Naive thymus-derived CD4-positive, alpha-beta T cell (primary cell): ENCODE measurements at regions of chrX and their contacts with region 1.

Region 1: GRCh38 chrX:46573331-46573891 is at the start of gene CHST7:
- DNase-seq: peak in 8 of 9 donors; percentile 15 to 60 (median 25)
- ATAC-seq: peak; percentile 69
- H3K4me3 ChIP-seq: peak within 1 kb of the TSS; percentile 61
- H3K4me3 Mint-ChIP-seq: peak within 1 kb of the TSS; percentile 51 to 84 (median 74)
- H3K27ac ChIP-seq: peak within 1 kb of the TSS; percentile 57
- H3K27ac Mint-ChIP-seq: peak within 1 kb of the TSS in 7 of 9 donors; percentile 17 to 81 (median 72)
- H3K4me1 ChIP-seq: peaks cover 3 to 17% of the 10 kb centered on the region in 2 donors
- H3K4me1 Mint-ChIP-seq: peaks cover 16 to 41% (median 35%) of the 10 kb centered on the region in 7 donors
- H3K27me3 ChIP-seq: no peaks in the 10 kb centered on the region
- H3K27me3 Mint-ChIP-seq: no peaks in the 10 kb centered on the region
- total RNA-seq, gene CHST7: 2.1 to 7.2 (median 2.3) TPM

Region 2: DNA sequence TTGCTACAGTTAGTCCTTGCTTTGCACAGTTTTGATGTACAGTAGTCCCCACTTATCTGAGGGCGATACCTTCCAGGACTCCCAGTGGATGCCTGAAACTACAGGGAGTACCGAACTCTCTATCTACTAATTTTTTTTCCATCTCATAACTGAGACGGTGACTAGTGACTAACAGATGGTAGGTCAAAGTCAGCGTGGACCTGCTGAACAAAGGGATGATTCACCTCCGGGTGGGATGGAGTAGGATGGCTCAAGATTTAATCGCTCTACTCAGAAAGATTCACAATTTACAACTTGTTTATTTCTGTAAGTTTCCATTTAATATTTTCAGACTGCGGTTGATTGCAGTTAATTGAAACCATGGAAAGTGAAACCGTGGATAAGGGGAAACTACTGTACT is 683.9 kb before region 1 on chrX:
- CTCF ChIA-PET with region 1: no interaction called
- POLR2A ChIA-PET with region 1: no interaction called
- intact Hi-C with region 1: no loop called
- DNase-seq: no peak
- ATAC-seq: no peak
- H3K4me3 ChIP-seq: no peak overlapping the region
- H3K4me3 Mint-ChIP-seq: no peak overlapping the region
- H3K27ac ChIP-seq: no peak overlapping the region
- H3K27ac Mint-ChIP-seq: no peak overlapping the region
- H3K4me1 ChIP-seq: no peaks in the 10 kb centered on the region
- H3K4me1 Mint-ChIP-seq: no peaks in the 10 kb centered on the region
- H3K27me3 ChIP-seq: no peaks in the 10 kb centered on the region
- H3K27me3 Mint-ChIP-seq: no peaks in the 10 kb centered on the region

Region 3: GRCh38 chrX:46588263-46588662 is 14.9 kb after region 1 on chrX:
- CTCF ChIA-PET with region 1: interaction called, 4 read pairs
- POLR2A ChIA-PET with region 1: interaction called, 8 read pairs
- intact Hi-C with region 1: loop called (anchors 1 to 2 kb)
- DNase-seq: peak in 8 of 9 donors; percentile 30 to 60 (median 48)
- ATAC-seq: peak; percentile 27
- H3K4me3 ChIP-seq: peak overlapping the region; percentile 28
- H3K4me3 Mint-ChIP-seq: peak overlapping the region; percentile 68 to 86 (median 78)
- H3K27ac ChIP-seq: peak overlapping the region; percentile 44
- H3K27ac Mint-ChIP-seq: peak overlapping the region; percentile 69 to 87 (median 85)
- H3K4me1 ChIP-seq: peaks cover 16% of the 10 kb centered on the region in 2 donors
- H3K4me1 Mint-ChIP-seq: peaks cover 7 to 49% (median 32%) of the 10 kb centered on the region in 7 donors
- H3K27me3 ChIP-seq: no peaks in the 10 kb centered on the region
- H3K27me3 Mint-ChIP-seq: no peaks in the 10 kb centered on the region

Region 4: DNA sequence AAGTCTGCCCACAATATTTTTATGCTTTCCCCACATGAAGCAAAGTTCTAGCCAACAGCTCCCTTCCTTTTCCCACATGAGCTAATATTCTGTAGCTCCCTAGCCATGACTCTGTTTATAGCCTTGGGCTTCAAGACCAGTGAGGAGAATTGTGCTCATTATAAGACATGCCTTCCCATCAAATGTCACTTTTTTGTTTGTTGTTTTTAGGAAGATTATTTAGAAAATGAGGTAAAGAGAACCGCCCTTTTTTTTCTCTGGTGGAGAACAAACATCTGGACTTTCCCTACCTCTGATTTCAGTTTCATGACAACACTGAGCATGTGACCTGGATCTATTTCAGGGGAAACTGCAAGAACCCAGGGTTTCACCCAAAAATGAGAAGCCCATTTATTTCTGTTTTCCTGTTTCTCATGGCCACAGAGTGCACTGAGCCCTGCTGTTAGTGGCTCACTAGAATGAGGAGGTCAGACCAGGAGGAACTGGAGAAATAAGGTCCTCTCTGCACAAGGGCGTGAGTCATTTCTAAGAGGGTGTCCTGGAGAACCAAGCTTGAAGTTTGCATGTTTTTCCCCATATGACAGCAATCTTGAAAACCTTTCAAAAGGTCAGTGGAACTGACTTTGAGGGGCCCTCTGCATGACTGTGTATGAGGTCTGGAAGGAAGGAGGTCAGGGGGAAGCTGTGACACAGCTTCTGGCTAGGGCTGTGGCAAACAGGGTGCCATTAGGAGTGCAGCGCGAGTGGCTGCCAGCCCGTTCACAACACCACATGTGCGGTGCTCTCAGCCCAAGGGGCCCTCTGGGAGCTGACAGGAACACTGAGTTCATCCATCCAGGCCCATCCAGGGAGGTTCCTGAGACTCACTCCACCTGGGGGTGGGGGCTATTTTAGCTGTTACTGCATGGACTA is 55.3 kb after region 1 on chrX:
- CTCF ChIA-PET with region 1: no interaction called
- POLR2A ChIA-PET with region 1: no interaction called
- intact Hi-C with region 1: loop called in 1 of 2 experiments (anchors 2 kb)
- DNase-seq: peak in 1 of 9 donors; percentile 36
- ATAC-seq: peak; percentile 83
- H3K4me3 ChIP-seq: no peak overlapping the region
- H3K4me3 Mint-ChIP-seq: peak overlapping the region in 1 of 10 donors; percentile 76
- H3K27ac ChIP-seq: no peak overlapping the region
- H3K27ac Mint-ChIP-seq: peak overlapping the region in 1 of 9 donors; percentile 92
- H3K4me1 ChIP-seq: peaks cover 0 to 6% of the 10 kb centered on the region in 2 donors
- H3K4me1 Mint-ChIP-seq: peaks cover 0 to 43% (median 9%) of the 10 kb centered on the region in 7 donors
- H3K27me3 ChIP-seq: no peaks in the 10 kb centered on the region
- H3K27me3 Mint-ChIP-seq: peaks cover 0 to 2% (median 0%) of the 10 kb centered on the region in 5 donors

Region 5: DNA sequence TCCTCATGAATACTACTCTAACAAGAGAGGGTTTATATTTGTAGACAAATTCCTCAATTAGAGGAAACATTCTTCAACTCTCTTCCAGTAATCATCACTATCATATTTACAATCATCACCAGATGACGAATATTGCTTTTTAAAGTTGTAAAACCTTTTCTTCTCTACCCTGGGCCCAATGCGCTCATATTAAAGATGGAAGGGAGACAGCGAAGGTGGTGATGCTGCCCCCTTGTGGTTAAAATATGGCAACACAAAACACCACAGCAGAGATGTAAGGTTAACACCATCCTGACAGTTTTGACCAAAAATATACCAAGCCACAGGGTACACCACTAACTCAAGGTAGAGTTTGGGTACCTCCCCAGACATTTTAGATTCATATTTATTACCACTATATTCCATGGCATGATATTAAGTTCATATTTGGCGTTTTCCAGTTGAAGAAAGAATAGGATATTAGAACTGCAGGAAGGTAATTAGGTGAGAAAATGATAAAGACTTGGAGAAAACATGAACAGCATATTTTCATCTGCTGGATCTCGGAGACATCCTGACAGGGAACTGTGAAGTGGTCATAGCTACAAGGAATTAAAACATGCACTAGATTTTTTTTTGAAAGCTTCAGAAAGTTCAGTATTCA is 112.7 kb after region 1 on chrX:
- CTCF ChIA-PET with region 1: no interaction called
- POLR2A ChIA-PET with region 1: no interaction called
- intact Hi-C with region 1: loop called in 1 of 2 experiments (anchors 5 kb)
- DNase-seq: peak in 6 of 9 donors; percentile 5 to 42 (median 28)
- ATAC-seq: peak; percentile 54
- H3K4me3 ChIP-seq: no peak overlapping the region
- H3K4me3 Mint-ChIP-seq: no peak overlapping the region
- H3K27ac ChIP-seq: no peak overlapping the region
- H3K27ac Mint-ChIP-seq: no peak overlapping the region
- H3K4me1 ChIP-seq: no peaks in the 10 kb centered on the region
- H3K4me1 Mint-ChIP-seq: peaks cover 0 to 15% (median 0%) of the 10 kb centered on the region in 7 donors
- H3K27me3 ChIP-seq: no peaks in the 10 kb centered on the region
- H3K27me3 Mint-ChIP-seq: no peaks in the 10 kb centered on the region

Region 6: GRCh38 chrX:46758906-46759644 is 185.7 kb after region 1 on chrX and contains the start of gene SLC9A7:
- CTCF ChIA-PET with region 1: no interaction called
- POLR2A ChIA-PET with region 1: no interaction called
- intact Hi-C with region 1: no loop called
- DNase-seq: peak; percentile 55 to 81 (median 75)
- ATAC-seq: peak; percentile 89
- H3K4me3 ChIP-seq: peak within 1 kb of the TSS; percentile 61
- H3K4me3 Mint-ChIP-seq: peak within 1 kb of the TSS; percentile 87 to 98 (median 90)
- H3K27ac ChIP-seq: peak within 1 kb of the TSS; percentile 41
- H3K27ac Mint-ChIP-seq: peak within 1 kb of the TSS in 8 of 9 donors; percentile 15 to 95 (median 72)
- H3K4me1 ChIP-seq: peaks cover 0 to 4% of the 10 kb centered on the region in 2 donors
- H3K4me1 Mint-ChIP-seq: peaks cover 4 to 24% (median 13%) of the 10 kb centered on the region in 7 donors
- H3K27me3 ChIP-seq: no peaks in the 10 kb centered on the region
- H3K27me3 Mint-ChIP-seq: peaks cover 0 to 18% (median 3%) of the 10 kb centered on the region in 5 donors
- total RNA-seq, gene SLC9A7: 3.0 to 11.3 (median 4.4) TPM